Activated CD4-positive, alpha-beta T cell treated with anti-CD3 and anti-CD28 coated beads for 36 hours (primary cell): ENCODE measurements at regions of chr7 and their contacts with region 1.

Region 1: DNA sequence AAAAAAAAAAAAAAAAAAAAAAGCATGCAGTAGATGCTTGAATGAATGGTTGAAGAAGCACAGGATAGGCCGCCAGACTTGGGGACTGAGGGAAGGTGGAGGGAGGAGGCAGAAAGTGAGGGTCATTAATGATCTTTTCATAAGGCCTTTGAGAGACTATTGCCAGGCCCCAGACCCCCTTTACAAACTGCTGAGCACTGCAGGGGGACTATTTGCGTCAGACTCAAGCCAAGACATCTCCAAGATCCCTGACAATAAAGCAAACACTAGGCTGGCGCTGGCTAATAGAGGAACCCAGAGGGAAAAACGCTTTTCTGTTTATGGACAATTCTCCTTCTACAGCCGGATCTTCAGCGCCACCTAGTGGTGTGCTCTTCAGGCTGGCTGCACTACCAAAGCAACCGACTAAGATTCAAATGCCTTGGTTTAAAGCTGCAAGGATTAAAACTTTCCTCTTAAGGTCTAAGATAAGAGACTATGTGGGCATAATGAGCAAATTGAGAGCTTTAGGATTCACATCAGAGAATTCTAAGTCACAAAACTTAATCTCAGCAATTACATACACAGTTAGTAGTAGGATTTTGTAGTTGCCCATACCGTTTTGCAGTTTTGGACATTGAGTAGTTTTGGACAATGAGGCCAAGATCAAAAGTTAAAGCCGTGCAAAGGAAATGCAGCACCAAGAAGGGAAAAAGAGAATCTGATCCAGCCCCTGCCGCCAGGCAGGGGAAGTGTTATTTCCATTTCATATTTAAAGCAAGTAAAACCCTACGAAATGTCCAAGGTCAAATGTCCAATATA is 17.9 kb upstream of the AGK start:
- DNase-seq: peak; percentile 79
- ATAC-seq: no peak
- H3K4me3 Mint-ChIP-seq: no peak overlapping the region
- H3K27ac Mint-ChIP-seq: no peak overlapping the region
- H3K4me1 Mint-ChIP-seq: no peaks in the 10 kb centered on the region
- H3K27me3 Mint-ChIP-seq: peaks cover 30% of the 10 kb centered on the region

Region 2: GRCh38 chr7:140517546-140518369 is 1015.6 kb before region 1 on chr7:
- CTCF ChIA-PET with region 1: no interaction called
- POLR2A ChIA-PET with region 1: no interaction called
- intact Hi-C with region 1: loop called (anchors 1 to 5 kb)
- DNase-seq: peak; percentile 86
- ATAC-seq: peak; percentile 91
- H3K4me3 Mint-ChIP-seq: no peak overlapping the region
- H3K27ac Mint-ChIP-seq: no peak overlapping the region
- H3K4me1 Mint-ChIP-seq: peaks cover 3% of the 10 kb centered on the region
- H3K27me3 Mint-ChIP-seq: peaks cover 6% of the 10 kb centered on the region

Region 3: DNA sequence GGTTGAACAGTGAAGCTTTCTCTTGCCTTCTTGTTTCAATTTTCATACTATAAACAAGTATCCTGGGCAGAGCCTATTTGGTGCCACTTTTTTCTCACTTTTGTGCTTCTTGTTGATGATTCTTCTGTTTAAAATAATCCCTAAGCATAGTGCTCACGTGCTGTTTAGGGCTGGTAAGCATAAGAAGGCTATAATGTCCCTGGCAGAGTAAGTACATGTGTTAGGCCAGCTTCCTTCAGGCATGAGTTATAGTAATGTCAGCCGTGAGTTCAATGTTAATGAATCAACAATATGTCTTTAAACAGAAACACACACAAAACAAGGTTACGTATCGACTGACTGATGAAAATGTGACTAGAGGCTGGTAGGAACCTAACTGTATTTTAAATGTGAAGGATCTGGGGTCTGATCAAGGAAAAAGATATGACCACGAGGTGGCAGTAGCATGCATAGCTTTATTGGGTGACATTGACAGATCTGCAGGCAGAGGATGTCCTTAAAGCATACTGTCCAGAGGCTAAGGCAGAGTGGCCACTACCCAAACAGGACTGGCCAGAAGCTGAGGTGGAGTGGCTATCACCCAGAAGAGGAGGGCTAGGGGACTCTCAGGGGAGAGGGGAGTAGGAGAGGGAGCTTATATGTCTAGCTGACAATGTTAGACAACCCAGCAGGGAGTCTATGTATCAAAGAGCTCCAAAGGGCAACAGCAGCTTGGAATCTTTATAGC is 722.4 kb before region 1 on chr7:
- CTCF ChIA-PET with region 1: no interaction called
- POLR2A ChIA-PET with region 1: no interaction called
- intact Hi-C with region 1: loop called (anchors 1 to 2 kb)
- DNase-seq: peak; percentile 68
- ATAC-seq: peak; percentile 77
- H3K4me3 Mint-ChIP-seq: no peak overlapping the region
- H3K27ac Mint-ChIP-seq: no peak overlapping the region
- H3K4me1 Mint-ChIP-seq: peaks cover 8% of the 10 kb centered on the region
- H3K27me3 Mint-ChIP-seq: no peaks in the 10 kb centered on the region

Region 4: GRCh38 chr7:141072548-141073172 is 460.7 kb before region 1 on chr7:
- CTCF ChIA-PET with region 1: interaction called, 3 read pairs
- POLR2A ChIA-PET with region 1: no interaction called
- intact Hi-C with region 1: loop called (anchors 1 to 2 kb)
- DNase-seq: peak; percentile 54
- ATAC-seq: peak; percentile 42
- H3K4me3 Mint-ChIP-seq: peak overlapping the region; percentile 52
- H3K27ac Mint-ChIP-seq: no peak overlapping the region
- H3K4me1 Mint-ChIP-seq: peaks cover 16% of the 10 kb centered on the region
- H3K27me3 Mint-ChIP-seq: peaks cover 48% of the 10 kb centered on the region

Region 5: DNA sequence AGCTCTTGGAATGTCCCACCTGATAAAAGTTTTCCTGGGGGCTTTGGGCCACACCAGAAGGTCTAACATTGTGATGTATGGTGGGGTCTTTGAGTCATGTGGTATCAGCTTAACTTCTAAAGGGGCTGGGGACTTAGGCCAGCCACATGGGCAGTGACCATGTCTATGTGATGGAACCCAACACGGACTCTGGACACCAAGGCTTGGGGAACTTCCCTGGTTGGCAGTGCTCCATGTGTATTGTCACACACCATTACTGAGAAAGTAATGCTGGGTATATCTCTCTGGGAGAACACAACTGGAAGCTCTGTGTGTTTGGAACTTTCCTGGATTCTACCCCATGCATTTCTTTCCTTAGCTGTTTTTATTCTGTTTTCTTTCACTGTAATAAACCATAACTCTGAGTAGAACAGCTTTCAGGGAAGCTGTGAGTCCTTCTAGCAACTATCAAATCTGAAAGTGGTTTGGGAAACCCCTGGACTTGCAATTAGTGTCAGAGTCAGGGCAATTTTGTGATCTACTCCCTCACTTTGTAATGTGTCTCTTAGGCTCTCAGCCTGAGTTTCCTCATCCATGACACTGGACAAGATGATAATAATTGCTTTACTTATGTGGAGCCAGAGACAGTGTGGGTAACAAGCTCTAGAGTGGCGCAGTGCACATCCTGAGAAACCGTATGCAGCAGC is 10.5 kb before region 1 on chr7:
- CTCF ChIA-PET with region 1: interaction called, 10 read pairs
- POLR2A ChIA-PET with region 1: no interaction called
- intact Hi-C with region 1: no loop called
- DNase-seq: no peak
- ATAC-seq: no peak
- H3K4me3 Mint-ChIP-seq: no peak overlapping the region
- H3K27ac Mint-ChIP-seq: no peak overlapping the region
- H3K4me1 Mint-ChIP-seq: peaks cover 4% of the 10 kb centered on the region
- H3K27me3 Mint-ChIP-seq: peaks cover 13% of the 10 kb centered on the region